Dorsolateral prefrontal cortex (tissue), 120 donors: ENCODE measurements at regions of chr22 and their contacts with region 1.

Region 1: DNA sequence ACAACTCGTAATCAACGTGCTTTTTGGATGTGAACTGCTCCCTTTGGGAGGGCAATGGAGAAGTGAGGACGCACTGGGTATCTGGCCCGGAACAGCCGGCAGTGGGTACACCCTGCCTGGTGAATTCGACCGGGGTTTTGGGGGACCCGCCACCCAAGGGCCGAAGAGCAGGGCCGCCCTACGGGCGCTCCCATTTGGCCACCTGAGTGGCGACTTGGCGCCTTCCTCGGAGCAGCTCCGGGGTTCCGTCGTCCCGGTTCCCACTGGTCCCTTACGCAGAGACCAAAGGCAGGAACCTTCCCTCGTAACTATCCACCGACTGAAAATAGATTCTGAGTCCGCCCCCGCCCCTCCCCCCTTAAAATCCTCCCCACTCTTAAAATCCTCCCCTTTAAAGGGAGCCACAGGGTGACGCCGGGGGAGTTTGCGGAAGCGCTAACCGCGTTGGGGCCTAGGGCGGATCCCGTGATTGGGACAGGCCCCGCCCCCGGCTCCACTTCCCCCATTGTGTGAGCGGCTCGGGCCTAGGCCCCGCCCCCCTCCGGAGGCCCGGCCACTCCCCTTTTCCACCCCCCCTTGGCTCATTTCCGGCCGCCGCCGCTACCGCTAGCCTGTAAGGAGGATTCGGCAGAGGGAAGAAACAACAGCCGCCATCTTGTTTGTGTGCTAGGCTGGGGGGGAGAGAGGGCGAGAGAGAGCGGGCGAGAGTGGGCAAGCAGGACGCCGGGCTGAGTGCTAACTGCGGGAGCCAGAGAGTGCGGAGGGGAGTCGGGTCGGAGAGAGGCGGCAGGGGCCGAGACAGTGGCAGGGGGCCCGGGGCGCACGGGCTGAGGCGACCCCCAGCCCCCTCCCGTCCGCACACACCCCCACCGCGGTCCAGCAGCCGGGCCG is 1.0 kb upstream of the EP300 start:
- DNase-seq: peak; percentile 97 to 100 (median 99)
- H3K4me3 ChIP-seq: peak overlapping the region; percentile 63 to 99 (median 93)
- H3K27ac ChIP-seq: peak overlapping the region; percentile 93 to 100 (median 100)
- H3K27me3 ChIP-seq: no peaks in the 10 kb centered on the region
- CTCF ChIP-seq: peak in 18 of 56 donors; percentile 4 to 42 (median 22)

Region 2: GRCh38 chr22:41022470-41023298 is 68.7 kb before region 1 on chr22:
- intact Hi-C with region 1: loop called (anchors 5 kb)
- DNase-seq: peak; percentile 55 to 84 (median 70)
- H3K4me3 ChIP-seq: peak overlapping the region; percentile 56 to 87 (median 78)
- H3K27ac ChIP-seq: peak overlapping the region in 57 of 59 donors; percentile 6 to 94 (median 85)
- H3K27me3 ChIP-seq: no peaks in the 10 kb centered on the region
- CTCF ChIP-seq: peak in 5 of 56 donors; percentile 2 to 33 (median 14)

Region 3: GRCh38 chr22:41237707-41238569 is 146.6 kb after region 1 on chr22:
- intact Hi-C with region 1: loop called in 1 of 2 experiments (anchors 5 kb)
- DNase-seq: peak in 5 of 10 donors; percentile 36 to 75 (median 63)
- H3K4me3 ChIP-seq: peak overlapping the region; percentile 11 to 75 (median 49)
- H3K27ac ChIP-seq: peak overlapping the region; percentile 39 to 100 (median 99)
- H3K27me3 ChIP-seq: no peaks in the 10 kb centered on the region
- CTCF ChIP-seq: peak in 42 of 56 donors; percentile 11 to 52 (median 35)

Region 4: GRCh38 chr22:41301105-41302020 is 210.0 kb after region 1 on chr22 and contains the start of gene ZC3H7B:
- intact Hi-C with region 1: loop called in 1 of 2 experiments (anchors 10 kb)
- DNase-seq: peak; percentile 61 to 87 (median 78)
- H3K4me3 ChIP-seq: peak within 1 kb of the TSS; percentile 62 to 98 (median 90)
- H3K27ac ChIP-seq: peak within 1 kb of the TSS; percentile 66 to 96 (median 91)
- H3K27me3 ChIP-seq: no peaks in the 10 kb centered on the region
- CTCF ChIP-seq: peak in 55 of 56 donors; percentile 22 to 72 (median 56)
- total RNA-seq, gene ZC3H7B: 84.4 to 177 (median 117) TPM

Region 5: GRCh38 chr22:41397143-41397811 is 305.9 kb after region 1 on chr22:
- intact Hi-C with region 1: no loop called
- DNase-seq: no peak
- H3K4me3 ChIP-seq: no peak overlapping the region
- H3K27ac ChIP-seq: peak overlapping the region in 55 of 59 donors; percentile 26 to 100 (median 96)
- H3K27me3 ChIP-seq: no peaks in the 10 kb centered on the region
- CTCF ChIP-seq: no peak

Region 6: GRCh38 chr22:43066844-43067385 is 1975.5 kb after region 1 on chr22:
- intact Hi-C with region 1: no loop called
- DNase-seq: no peak
- H3K4me3 ChIP-seq: no peak overlapping the region
- H3K27ac ChIP-seq: no peak overlapping the region
- H3K27me3 ChIP-seq: no peaks in the 10 kb centered on the region
- CTCF ChIP-seq: no peak